Breast epithelium (tissue), 4 donors: ENCODE measurements at regions of chr12 and their contacts with region 1.

Region 1: GRCh38 chr12:104816845-104817503 is 141.1 kb downstream of the SLC41A2 start:
- DNase-seq: no peak
- H3K4me3 ChIP-seq: no peak overlapping the region
- H3K27ac ChIP-seq: no peak overlapping the region
- H3K4me1 ChIP-seq: no peaks in the 10 kb centered on the region
- H3K27me3 ChIP-seq: no peaks in the 10 kb centered on the region
- CTCF ChIP-seq: no peak
- POLR2A ChIP-seq: no peak

Region 2: DNA sequence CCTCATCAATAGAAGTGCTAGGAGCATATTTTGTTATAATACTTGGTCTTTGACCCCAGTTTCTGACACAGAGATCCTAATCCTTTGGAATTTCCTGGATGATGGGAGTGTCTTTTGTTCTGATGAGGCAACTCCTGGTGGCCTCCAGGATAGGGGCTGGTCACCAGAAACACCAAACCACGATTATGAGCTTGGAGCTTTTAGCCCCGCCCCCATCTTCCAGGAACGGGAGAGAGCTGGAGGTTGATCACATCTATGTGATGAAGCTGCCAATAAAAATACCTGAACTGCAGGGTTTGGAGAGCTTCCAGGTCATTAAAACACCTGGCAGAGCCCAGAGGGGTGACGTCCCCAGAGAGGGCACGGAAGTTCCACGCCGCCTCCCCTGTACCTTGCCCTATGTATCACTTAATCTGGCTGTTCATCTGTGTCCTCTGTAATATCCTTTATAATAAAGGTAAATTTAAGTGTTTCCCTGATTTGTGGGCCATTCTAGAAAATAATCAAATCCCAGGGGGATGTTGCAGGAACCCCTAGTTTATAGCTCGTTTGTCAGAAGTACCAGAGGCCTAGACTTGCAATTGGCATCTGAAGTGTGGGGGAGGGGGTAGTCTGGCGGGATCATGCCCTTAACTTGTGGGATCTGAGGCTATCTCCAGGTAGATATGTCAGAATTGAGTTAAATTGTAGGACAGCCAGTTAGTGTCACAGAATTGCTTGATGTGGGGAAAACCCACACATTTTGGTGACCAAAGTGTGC is 397.8 kb after region 1 on chr12:
- intact Hi-C with region 1: no loop called
- DNase-seq: peak; percentile 84 to 87
- H3K4me3 ChIP-seq: peak overlapping the region in 1 of 3 donors; percentile 17
- H3K27ac ChIP-seq: peak overlapping the region; percentile 91 to 94
- H3K4me1 ChIP-seq: peaks cover 0 to 10% of the 10 kb centered on the region in 2 donors
- H3K27me3 ChIP-seq: no peaks in the 10 kb centered on the region
- CTCF ChIP-seq: no peak
- POLR2A ChIP-seq: no peak

Region 3: GRCh38 chr12:105641749-105642148 is 824.8 kb after region 1 on chr12:
- intact Hi-C with region 1: loop called (anchors 10 kb)
- DNase-seq: no peak
- H3K4me3 ChIP-seq: no peak overlapping the region
- H3K27ac ChIP-seq: no peak overlapping the region
- H3K4me1 ChIP-seq: no peaks in the 10 kb centered on the region
- H3K27me3 ChIP-seq: no peaks in the 10 kb centered on the region
- CTCF ChIP-seq: no peak
- POLR2A ChIP-seq: no peak